ENCODE measurements at regions of chr6 and their contacts with region 1.

Region 1: DNA sequence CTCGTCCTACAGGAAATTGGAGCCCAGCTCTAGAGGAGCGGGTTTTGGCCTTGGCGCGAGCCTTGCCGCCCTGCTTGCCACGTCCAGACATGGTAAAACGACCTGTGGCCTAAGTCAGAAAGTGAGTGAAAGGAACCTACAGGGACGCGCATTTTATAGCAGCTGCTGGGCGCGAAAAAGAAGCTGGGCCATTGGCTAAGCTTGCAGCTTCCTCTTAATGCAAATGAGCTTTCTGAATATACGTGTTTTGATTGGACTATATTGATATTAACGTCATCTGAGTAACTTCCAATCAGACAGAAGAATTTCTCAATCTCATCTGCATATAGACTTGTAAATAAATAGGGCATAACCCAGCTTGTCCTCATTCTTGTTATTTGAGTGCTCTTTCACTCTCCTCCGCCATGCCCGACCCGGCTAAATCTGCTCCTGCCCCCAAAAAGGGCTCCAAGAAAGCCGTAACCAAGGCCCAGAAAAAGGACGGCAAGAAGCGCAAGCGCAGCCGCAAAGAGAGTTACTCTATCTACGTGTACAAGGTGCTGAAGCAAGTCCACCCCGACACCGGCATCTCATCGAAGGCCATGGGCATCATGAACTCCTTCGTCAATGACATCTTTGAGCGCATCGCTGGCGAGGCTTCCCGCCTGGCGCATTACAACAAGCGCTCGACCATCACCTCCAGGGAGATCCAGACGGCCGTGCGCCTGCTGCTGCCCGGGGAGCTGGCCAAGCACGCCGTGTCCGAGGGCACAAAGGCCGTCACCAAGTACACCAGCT is 18.9 kb downstream of the OR2B2 start:
- DNase-seq: peak; percentile 83 to 97
- ATAC-seq: peak; percentile 51 to 68
- H3K4me3 ChIP-seq: peak overlapping the region; percentile 73
- H3K27ac ChIP-seq: peak overlapping the region; percentile 91 to 97
- H3K4me1 ChIP-seq: peaks cover 22% of the 10 kb centered on the region
- CTCF ChIP-seq: no peak
- EP300 ChIP-seq: no peak
- POLR2A ChIP-seq: peak; percentile 97
- RAD21 ChIP-seq: no peak

Region 2: DNA sequence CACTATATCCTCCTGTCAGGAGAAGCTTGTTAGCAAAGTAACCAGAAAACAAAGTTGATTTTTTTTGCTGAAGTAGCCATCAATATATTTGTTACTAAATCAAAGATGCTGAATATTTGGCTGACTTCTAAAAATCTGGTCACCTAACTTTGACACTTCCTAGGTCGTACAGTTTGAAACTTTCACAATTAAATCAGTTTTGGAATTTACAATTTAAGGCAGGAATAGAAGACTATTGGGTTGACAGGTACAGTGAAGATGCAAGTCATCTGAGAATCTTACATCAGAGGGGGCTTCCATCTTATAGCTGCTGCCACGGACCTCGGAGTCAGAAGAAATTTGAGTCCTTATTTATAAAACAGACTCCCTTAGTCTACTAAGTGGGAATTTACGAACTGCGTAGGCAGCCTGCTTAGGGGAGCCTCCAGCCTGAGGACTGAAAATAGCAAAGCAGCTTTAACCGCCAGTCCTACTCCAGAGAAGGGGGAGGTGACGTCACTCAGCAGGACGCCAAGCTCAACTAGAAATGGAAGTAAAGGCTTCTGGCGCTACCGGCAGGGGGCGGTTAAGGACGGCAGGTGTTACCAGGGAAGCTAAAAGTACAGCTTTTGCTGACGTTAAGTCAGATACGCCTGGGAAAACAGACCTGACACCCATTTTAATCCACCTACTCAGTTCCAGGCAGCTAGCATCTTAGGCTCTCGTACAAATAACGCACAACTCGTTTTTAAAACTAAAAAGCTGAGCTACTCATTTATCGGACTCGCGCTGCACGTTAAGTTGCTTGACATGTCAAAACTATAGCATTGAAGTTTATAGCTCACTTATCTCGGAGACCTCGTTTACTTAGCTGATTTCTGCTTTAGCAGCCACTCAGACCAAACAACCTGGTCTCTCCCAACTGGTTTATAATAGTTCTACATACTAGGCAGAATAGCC is 1867.1 kb before region 1 on chr6:
- CTCF ChIA-PET with region 1: no interaction called
- POLR2A ChIA-PET with region 1: interaction called, 15 read pairs
- DNase-seq: peak; percentile 45 to 95
- ATAC-seq: peak; percentile 58 to 60
- H3K4me3 ChIP-seq: peak overlapping the region; percentile 69
- H3K27ac ChIP-seq: peak overlapping the region; percentile 95 to 100
- H3K4me1 ChIP-seq: peaks cover 52% of the 10 kb centered on the region
- CTCF ChIP-seq: peak; percentile 53
- EP300 ChIP-seq: no peak
- POLR2A ChIP-seq: peak; percentile 39; the same call in 1 of the 2 replicates
- RAD21 ChIP-seq: peak in 1 of 2 experiments; percentile 30; a peak in 2 of 5 replicates

Region 3: DNA sequence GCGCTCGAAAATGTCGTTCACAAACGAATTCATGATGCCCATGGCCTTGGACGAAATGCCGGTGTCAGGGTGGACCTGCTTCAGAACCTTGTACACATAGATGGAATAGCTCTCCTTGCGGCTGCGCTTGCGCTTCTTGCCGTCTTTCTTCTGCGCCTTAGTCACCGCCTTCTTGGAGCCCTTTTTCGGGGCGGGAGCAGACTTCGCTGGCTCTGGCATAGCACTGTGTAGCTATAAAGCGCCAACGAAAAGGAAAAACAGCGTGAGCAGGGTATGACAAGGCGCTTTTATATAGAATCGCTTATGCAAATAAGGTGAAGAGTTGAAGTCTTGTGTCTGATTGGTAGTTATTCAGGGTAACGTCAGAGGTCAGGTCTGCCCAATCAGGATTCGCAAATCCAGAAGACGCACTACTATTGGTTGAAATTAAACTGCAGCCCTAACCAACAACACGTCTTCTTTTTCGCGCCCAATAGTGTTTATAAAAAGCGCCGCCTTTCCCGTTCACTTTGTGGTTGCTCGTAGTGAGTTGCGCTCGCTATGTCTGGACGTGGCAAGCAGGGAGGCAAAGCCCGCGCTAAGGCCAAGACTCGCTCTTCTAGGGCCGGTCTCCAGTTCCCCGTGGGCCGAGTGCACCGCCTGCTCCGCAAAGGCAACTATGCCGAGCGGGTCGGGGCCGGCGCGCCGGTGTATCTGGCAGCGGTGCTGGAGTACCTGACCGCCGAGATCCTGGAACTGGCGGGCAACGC is 760.5 kb before region 1 on chr6:
- CTCF ChIA-PET with region 1: interaction called, 4 read pairs
- POLR2A ChIA-PET with region 1: interaction called, 27 read pairs
- DNase-seq: peak; percentile 93 to 99
- ATAC-seq: peak; percentile 81 to 83
- H3K4me3 ChIP-seq: peak overlapping the region; percentile 75
- H3K27ac ChIP-seq: peak overlapping the region; percentile 85 to 96
- H3K4me1 ChIP-seq: peaks cover 46% of the 10 kb centered on the region
- CTCF ChIP-seq: no peak
- EP300 ChIP-seq: 0 out of 5 replicates have a peak, but pooled peaks of 1 of the 2 experiments have one; percentile 11
- POLR2A ChIP-seq: peak; percentile 96
- RAD21 ChIP-seq: no peak

Region 4: GRCh38 chr6:27809939-27810767 is 83.1 kb before region 1 on chr6:
- CTCF ChIA-PET with region 1: interaction called, 28 read pairs
- POLR2A ChIA-PET with region 1: interaction called, 270 read pairs
- DNase-seq: peak; percentile 80 to 95
- ATAC-seq: peak; percentile 58 to 59
- H3K4me3 ChIP-seq: peak overlapping the region; percentile 53
- H3K27ac ChIP-seq: peak overlapping the region; percentile 83 to 99
- H3K4me1 ChIP-seq: peaks cover 28% of the 10 kb centered on the region; the same call in 2 of the 3 replicates
- CTCF ChIP-seq: no peak
- EP300 ChIP-seq: no peak
- POLR2A ChIP-seq: peak; percentile 97
- RAD21 ChIP-seq: no peak

Region 5: DNA sequence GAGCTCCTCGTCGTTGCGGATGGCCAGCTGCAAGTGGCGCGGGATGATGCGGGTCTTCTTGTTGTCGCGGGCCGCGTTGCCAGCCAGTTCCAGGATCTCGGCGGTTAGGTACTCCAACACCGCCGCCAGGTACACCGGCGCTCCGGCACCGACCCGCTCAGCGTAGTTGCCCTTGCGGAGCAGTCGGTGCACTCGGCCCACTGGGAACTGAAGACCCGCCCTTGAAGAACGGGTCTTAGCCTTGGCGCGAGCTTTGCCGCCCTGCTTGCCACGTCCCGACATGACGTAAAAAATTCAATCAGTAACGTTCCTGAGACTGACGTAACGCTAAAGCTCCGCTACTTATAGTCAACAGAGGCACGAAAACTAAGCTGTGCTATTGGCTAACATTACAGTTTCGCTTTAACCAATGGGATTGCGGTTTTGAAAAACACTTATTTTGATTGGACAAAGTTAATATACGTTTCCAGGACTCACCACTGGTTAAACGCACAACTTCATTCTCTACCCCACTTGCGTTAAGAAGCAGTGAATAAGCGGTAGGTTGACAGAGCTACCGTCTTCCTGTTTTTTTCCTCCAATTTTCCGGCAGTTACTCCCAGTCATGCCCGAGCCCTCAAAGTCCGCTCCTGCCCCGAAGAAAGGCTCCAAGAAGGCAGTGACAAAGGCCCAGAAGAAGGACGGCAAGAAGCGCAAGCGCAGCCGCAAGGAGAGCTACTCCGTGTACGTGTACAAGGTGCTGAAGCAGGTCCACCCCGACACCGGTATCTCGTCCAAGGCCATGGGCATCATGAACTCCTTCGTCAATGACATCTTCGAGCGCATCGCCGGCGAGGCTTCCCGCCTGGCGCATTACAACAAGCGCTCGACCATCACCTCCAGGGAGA is 54.9 kb before region 1 on chr6:
- CTCF ChIA-PET with region 1: interaction called, 23 read pairs
- POLR2A ChIA-PET with region 1: interaction called, 163 read pairs
- DNase-seq: peak; percentile 87 to 98
- ATAC-seq: peak; percentile 87 to 90
- H3K4me3 ChIP-seq: peak overlapping the region; percentile 84
- H3K27ac ChIP-seq: peak overlapping the region; percentile 97 to 99
- H3K4me1 ChIP-seq: peaks cover 23% of the 10 kb centered on the region
- CTCF ChIP-seq: no peak
- EP300 ChIP-seq: no peak
- POLR2A ChIP-seq: peak; percentile 71
- RAD21 ChIP-seq: no peak

Region 6: GRCh38 chr6:28104392-28105244 is 211.4 kb after region 1 on chr6:
- CTCF ChIA-PET with region 1: no interaction called
- POLR2A ChIA-PET with region 1: interaction called, 10 read pairs
- DNase-seq: peak; percentile 76 to 84
- ATAC-seq: peak; percentile 100
- H3K4me3 ChIP-seq: peak overlapping the region; percentile 64
- H3K27ac ChIP-seq: peak overlapping the region; percentile 85 to 95
- H3K4me1 ChIP-seq: 0 out of 3 replicates have a peak, but pooled peaks cover 3% of the 10 kb centered on the region
- CTCF ChIP-seq: no peak
- EP300 ChIP-seq: no peak
- POLR2A ChIP-seq: peak; percentile 81
- RAD21 ChIP-seq: 0 out of 5 replicates have a peak, but pooled peaks have one; percentile 10 to 18

Measured in A549 (cell line).